ENCODE measurements at regions of chr9 and their contacts with region 1.

Region 1: GRCh38 chr9:93302551-93303257 is 118.8 kb downstream of the WNK2 start:
- DNase-seq: peak; percentile 70
- ATAC-seq: peak; percentile 27

Region 2: GRCh38 chr9:93108291-93109041 is 194.2 kb before region 1 on chr9:
- intact Hi-C with region 1: loop called (anchors 5 kb)
- DNase-seq: peak; percentile 35
- ATAC-seq: no peak

Region 3: DNA sequence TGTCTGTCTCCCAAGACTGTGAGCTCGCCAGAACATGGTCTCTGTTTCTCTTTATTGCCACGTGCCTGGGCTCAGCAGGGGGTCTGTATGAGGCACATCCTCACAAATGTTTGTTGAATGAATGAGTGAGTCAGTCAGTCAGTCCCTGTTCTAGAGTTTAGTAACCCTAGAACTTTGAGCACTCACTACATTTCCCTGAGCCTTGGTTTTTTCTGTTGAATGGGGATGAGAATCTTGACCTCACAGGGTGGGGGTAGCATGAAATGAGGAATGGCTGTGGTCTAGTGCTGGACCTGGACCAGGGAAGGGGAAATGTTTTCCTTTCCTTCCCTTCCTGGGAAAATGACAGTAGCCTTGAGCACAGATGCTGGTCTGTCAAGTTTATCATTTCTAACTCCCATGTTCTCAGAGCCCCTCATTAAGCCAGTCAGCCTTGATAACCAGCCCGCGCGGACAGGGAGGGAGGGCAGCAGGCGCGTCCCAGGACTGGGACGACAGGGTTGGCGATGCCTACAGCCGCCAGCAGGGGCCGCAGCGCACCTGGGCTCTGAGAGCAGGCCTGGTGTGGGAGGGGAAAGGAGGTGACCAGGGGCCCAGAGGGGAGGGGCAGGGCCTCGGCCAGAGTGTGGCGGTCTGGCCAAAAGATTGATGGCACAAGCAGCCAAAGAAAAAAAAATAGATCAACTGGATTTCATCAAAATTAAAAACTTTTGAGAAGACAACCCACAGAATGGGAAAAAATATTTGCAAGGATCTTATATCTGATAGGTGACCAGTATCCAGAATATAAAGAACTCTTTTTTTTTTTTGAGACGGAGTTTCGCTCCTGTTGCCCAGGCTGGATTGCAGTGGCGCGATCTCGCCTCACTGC is 142.9 kb before region 1 on chr9:
- intact Hi-C with region 1: loop called (anchors 5 kb)
- DNase-seq: peak; percentile 91
- ATAC-seq: peak; percentile 95

Region 4: GRCh38 chr9:93958819-93959682 is 656.3 kb after region 1 on chr9:
- intact Hi-C with region 1: no loop called
- DNase-seq: no peak
- ATAC-seq: peak; percentile 43

Measured in Right ventricle myocardium superior (tissue), 1 donor.